AG04449 (cell line): ENCODE measurements at regions of chr4 and their contacts with region 1.

Region 1: GRCh38 chr4:41287050-41287449 is 30.3 kb downstream of the UCHL1 start:
- DNase-seq: no peak
- H3K4me3 ChIP-seq: no peak overlapping the region
- CTCF ChIP-seq: no peak

Region 2: DNA sequence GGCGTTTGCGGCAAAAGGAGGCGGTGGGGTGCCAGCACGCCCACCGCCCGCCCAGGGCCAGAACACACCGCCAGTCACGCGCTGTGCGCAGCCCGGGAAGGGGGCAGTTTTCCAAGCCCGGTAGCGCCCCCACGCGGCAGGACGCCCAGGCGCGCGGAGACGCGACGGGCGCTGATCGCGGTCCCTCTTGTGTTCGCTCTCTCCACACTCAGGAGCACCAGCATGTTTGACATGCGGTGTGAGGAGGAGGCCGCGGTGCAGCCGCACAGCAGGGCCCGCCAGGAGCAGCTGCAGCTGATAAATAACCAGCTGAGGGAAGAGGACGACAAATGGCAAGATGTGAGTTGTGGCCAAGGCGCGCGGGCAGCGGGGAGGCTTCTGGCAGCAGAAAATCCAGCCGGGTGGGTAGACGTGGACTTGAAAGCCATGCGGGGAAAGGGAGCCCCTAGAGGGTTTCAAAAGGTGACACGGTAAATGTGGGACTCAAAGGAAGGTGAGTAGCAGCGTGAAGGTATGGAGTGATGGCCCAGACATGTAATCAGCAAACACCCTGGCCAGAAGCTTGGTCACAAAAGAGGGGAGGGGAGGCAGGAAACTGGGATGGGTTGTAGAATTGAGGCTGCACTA is 357.4 kb after region 1 on chr4:
- CTCF ChIA-PET with region 1: interaction called, 47 read pairs
- POLR2A ChIA-PET with region 1: no interaction called
- DNase-seq: no peak
- H3K4me3 ChIP-seq: no peak overlapping the region
- CTCF ChIP-seq: peak; percentile 82